ENCODE measurements at regions of chr7 and their contacts with region 1.

Region 1: GRCh38 chr7:73578342-73579127 is at the start of gene TBL2:
- DNase-seq: peak; percentile 99
- ATAC-seq: peak; percentile 89
- H3K4me3 ChIP-seq: peak within 1 kb of the TSS; percentile 84
- H3K27ac ChIP-seq: peak within 1 kb of the TSS; percentile 47
- H3K4me1 ChIP-seq: peaks cover 20% of the 10 kb centered on the region
- H3K27me3 ChIP-seq: no peaks in the 10 kb centered on the region
- CTCF ChIP-seq: no peak
- total RNA-seq, gene TBL2: 62.8 and 73.0 TPM in 2 replicates

Region 2: GRCh38 chr7:73418113-73418703 is 160.3 kb before region 1 on chr7:
- CTCF ChIA-PET with region 1: no interaction called
- POLR2A ChIA-PET with region 1: no interaction called
- intact Hi-C with region 1: no loop called
- DNase-seq: no peak
- ATAC-seq: no peak
- H3K4me3 ChIP-seq: no peak overlapping the region
- H3K27ac ChIP-seq: no peak overlapping the region
- H3K4me1 ChIP-seq: no peaks in the 10 kb centered on the region
- H3K27me3 ChIP-seq: no peaks in the 10 kb centered on the region
- CTCF ChIP-seq: no peak

Region 3: DNA sequence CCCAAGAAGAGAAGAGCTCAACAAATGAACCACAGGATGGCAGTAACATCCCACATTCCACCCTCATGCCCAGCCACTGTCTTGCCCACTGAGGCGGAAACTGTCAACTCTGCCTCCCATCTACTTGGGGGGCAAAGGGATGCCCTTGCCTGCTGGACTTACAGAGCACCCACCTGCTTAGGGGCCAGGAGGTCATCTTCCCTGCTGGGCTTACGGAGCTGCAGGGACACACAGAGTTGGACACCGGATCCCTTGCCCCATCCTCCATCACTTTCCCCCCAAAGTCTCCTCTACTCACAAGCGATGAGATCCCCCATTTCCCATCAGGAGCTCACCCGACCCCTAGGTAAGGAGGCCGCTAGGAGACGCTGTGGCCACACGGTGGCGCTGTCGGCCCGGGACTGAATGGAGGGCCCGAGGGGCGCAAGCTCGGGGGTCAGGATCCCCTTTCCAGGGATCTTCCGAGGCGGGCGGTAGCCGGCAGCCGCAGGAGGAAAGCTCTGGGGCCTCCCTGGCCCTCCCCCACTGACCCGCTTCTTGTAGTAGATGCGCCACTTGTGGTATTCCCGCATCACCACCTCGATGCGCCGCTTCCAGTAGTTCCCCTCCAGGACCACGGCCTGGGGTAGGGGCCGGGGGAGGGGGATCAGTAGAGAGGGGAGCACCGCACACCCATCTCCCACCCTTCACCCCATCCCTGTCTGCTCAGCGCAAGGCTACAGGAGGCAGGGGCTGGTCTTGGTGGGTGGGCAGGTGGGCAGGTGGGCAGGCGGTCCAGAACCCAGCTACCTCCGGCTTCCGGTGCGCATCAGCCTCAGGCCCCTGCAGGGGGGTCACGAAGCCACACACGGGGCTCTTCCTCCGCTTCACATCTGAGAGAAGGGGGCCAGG is 28.5 kb after region 1 on chr7:
- CTCF ChIA-PET with region 1: no interaction called
- POLR2A ChIA-PET with region 1: no interaction called
- intact Hi-C with region 1: no loop called
- DNase-seq: peak; percentile 55
- ATAC-seq: peak; percentile 80
- H3K4me3 ChIP-seq: no peak overlapping the region
- H3K27ac ChIP-seq: no peak overlapping the region
- H3K4me1 ChIP-seq: no peaks in the 10 kb centered on the region
- H3K27me3 ChIP-seq: no peaks in the 10 kb centered on the region
- CTCF ChIP-seq: peak; percentile 94

Region 4: GRCh38 chr7:74173866-74174605 is 595.5 kb after region 1 on chr7 and contains the start of gene EIF4H:
- CTCF ChIA-PET with region 1: no interaction called
- POLR2A ChIA-PET with region 1: interaction called, 17 read pairs
- intact Hi-C with region 1: no loop called
- DNase-seq: peak; percentile 95
- ATAC-seq: peak; percentile 97
- H3K4me3 ChIP-seq: peak within 1 kb of the TSS; percentile 93
- H3K27ac ChIP-seq: peak within 1 kb of the TSS; percentile 46
- H3K4me1 ChIP-seq: peaks cover 24% of the 10 kb centered on the region
- H3K27me3 ChIP-seq: no peaks in the 10 kb centered on the region
- CTCF ChIP-seq: no peak
- total RNA-seq, gene EIF4H: 339 and 357 TPM in 2 replicates